GM12878 (cell line): ENCODE measurements at regions of chr17 and their contacts with region 1.

Region 1: DNA sequence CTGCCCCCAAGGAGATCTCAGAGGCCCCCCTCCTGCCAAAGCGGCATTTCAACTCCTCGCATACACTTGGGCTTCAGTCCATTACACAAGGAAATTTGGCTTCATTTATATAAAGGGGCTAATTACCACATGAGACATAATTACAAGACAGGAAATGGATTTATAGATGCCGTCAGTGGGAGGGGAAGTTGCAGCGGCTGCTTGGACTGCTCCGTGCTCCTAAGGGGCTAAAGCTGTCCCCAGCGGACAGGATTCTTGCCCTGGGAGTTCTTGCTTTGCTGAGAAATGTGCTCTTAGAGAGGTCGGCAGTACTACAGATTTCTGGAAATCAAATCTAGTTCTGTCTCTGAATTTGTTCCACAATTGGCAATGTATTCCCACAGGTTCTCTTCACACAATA is 57.2 kb upstream of the NLK start:
- DNase-seq: no peak
- ATAC-seq: peak; percentile 67
- H3K4me3 ChIP-seq: no peak overlapping the region
- H3K27ac ChIP-seq: no peak overlapping the region; the same call in 1 of the 2 replicates
- H3K4me1 ChIP-seq: peaks cover 14% of the 10 kb centered on the region
- H3K27me3 ChIP-seq: no peaks in the 10 kb centered on the region; a peak in 1 of 4 replicates
- CTCF ChIP-seq: no peak
- EP300 ChIP-seq: no peak
- POLR2A ChIP-seq: no peak
- RAD21 ChIP-seq: no peak

Region 2: GRCh38 chr17:27939474-27940465 is 45.5 kb before region 1 on chr17:
- CTCF ChIA-PET with region 1: interaction called, 5 read pairs
- POLR2A ChIA-PET with region 1: no interaction called
- RAD21 ChIA-PET with region 1: interaction called, 12 read pairs
- SMC1A ChIA-PET with region 1: interaction called, 10 read pairs
- in situ Hi-C with region 1: no loop called
- intact Hi-C with region 1: no loop called
- DNase-seq: no peak
- ATAC-seq: peak; percentile 93
- H3K4me3 ChIP-seq: no peak overlapping the region
- H3K27ac ChIP-seq: no peak overlapping the region
- H3K4me1 ChIP-seq: peaks cover 13% of the 10 kb centered on the region
- H3K27me3 ChIP-seq: no peaks in the 10 kb centered on the region
- CTCF ChIP-seq: no peak
- EP300 ChIP-seq: no peak; a peak in 1 of 4 replicates
- POLR2A ChIP-seq: no peak
- RAD21 ChIP-seq: no peak

Region 3: GRCh38 chr17:28071891-28072606 is 86.7 kb after region 1 on chr17:
- CTCF ChIA-PET with region 1: no interaction called
- POLR2A ChIA-PET with region 1: no interaction called
- RAD21 ChIA-PET with region 1: no interaction called
- SMC1A ChIA-PET with region 1: no interaction called
- in situ Hi-C with region 1: no loop called
- intact Hi-C with region 1: no loop called
- DNase-seq: no peak
- ATAC-seq: peak; percentile 71
- H3K4me3 ChIP-seq: no peak overlapping the region
- H3K27ac ChIP-seq: 0 out of 2 replicates have a peak overlapping the region, but pooled peaks have one; percentile 25
- H3K4me1 ChIP-seq: peaks cover 3% of the 10 kb centered on the region; the same call in 1 of the 2 replicates
- H3K27me3 ChIP-seq: no peaks in the 10 kb centered on the region
- CTCF ChIP-seq: no peak
- EP300 ChIP-seq: no peak; a peak in 1 of 4 replicates
- POLR2A ChIP-seq: no peak
- RAD21 ChIP-seq: no peak